Heart left ventricle (tissue), 16 donors: ENCODE measurements at regions of chr12 and their contacts with region 1.

Region 1: GRCh38 chr12:69359531-69360347 is at the start of gene YEATS4:
- DNase-seq: peak; percentile 82 to 92 (median 86)
- ATAC-seq: peak; percentile 96 to 98 (median 98)
- H3K4me3 ChIP-seq: peak within 1 kb of the TSS; percentile 52 to 93 (median 80)
- H3K27ac ChIP-seq: peak within 1 kb of the TSS; percentile 83 to 99 (median 92)
- H3K4me1 ChIP-seq: peaks cover 0 to 25% (median 9%) of the 10 kb centered on the region in 12 donors
- H3K27me3 ChIP-seq: no peaks in the 10 kb centered on the region
- CTCF ChIP-seq: no peak
- POLR2A ChIP-seq: no peak
- total RNA-seq, gene YEATS4: 6.7 to 45.0 (median 9.9) TPM

Region 2: DNA sequence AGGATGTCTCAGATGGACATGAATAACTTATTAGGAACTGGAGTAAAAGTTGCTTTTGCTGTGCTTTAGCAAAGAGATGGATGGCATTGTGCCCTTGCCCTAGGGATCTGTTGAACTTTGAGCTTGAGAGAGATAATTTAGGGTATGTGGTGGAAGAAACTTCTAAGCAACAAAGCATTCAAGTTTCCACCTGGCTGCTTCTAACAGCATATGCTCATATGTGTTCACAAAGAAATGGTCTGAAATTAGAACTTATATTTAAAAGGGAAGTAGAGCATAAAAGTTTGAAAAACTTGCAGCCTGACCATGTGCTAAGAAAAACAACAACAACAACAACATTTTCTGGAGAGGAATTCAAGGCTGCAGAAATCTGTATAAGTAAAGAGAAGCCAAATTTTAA is 128.3 kb before region 1 on chr12:
- intact Hi-C with region 1: no loop called
- DNase-seq: no peak
- ATAC-seq: no peak
- H3K4me3 ChIP-seq: no peak overlapping the region
- H3K27ac ChIP-seq: no peak overlapping the region
- H3K4me1 ChIP-seq: no peaks in the 10 kb centered on the region
- H3K27me3 ChIP-seq: no peaks in the 10 kb centered on the region
- CTCF ChIP-seq: no peak
- POLR2A ChIP-seq: no peak

Region 3: DNA sequence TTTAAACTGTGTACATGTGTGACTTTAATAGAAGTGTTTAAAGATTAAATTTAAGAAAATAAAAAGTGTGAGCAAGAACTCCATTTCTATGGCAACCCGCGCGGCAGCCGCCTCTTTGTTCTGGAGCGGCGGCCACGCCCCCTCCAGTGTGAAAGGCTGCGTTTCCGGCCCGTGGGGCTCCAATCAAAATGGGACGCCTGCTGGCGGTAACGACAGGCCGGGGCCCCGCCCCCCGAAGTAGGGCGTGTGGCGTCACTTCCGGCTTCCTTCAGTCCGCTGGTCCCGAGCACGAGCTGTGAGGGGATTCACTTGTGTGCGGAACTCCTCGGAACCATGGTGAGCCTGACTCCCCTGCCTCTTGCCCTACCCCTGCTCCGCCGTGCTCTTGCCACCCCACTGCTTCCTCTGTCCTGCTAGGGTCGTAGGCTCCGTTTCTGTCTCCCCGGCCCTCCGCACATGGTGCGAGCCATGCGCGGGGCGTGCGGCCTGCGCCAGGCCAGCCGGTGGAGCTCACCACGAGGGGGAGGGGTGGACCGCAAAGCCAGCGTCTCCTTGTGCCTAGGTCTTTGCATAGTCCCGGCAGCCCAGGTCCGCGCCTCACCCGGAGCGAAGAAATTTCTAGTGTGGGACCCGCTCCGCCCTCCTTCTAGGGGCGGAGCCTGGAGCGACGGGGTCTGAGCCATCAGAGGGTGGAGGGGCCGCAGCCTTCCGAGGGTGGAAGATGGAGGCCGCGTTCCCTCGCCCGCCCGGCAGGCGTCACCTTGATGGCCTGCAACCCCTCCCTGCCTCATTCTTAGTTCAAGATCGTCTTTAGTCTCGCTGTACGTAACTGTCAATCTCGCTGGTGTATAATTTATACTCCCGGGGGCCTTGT is 225.7 kb after region 1 on chr12 and contains the start of gene CCT2:
- intact Hi-C with region 1: loop called in 1 of 10 experiments (anchors 10 kb)
- DNase-seq: peak; percentile 97 to 98 (median 98)
- ATAC-seq: peak; percentile 99 to 100 (median 100)
- H3K4me3 ChIP-seq: peak within 1 kb of the TSS; percentile 63 to 99 (median 82)
- H3K27ac ChIP-seq: peak within 1 kb of the TSS; percentile 66 to 92 (median 90)
- H3K4me1 ChIP-seq: peaks cover 0 to 22% (median 11%) of the 10 kb centered on the region in 12 donors
- H3K27me3 ChIP-seq: no peaks in the 10 kb centered on the region
- CTCF ChIP-seq: peak in 9 of 12 donors; percentile 10 to 49 (median 23)
- POLR2A ChIP-seq: peak in 1 of 2 donors; percentile 86
- total RNA-seq, gene CCT2: 63.2 to 168 (median 93.3) TPM